ENCODE measurements at regions of chr16 and their contacts with region 1.

Region 1: DNA sequence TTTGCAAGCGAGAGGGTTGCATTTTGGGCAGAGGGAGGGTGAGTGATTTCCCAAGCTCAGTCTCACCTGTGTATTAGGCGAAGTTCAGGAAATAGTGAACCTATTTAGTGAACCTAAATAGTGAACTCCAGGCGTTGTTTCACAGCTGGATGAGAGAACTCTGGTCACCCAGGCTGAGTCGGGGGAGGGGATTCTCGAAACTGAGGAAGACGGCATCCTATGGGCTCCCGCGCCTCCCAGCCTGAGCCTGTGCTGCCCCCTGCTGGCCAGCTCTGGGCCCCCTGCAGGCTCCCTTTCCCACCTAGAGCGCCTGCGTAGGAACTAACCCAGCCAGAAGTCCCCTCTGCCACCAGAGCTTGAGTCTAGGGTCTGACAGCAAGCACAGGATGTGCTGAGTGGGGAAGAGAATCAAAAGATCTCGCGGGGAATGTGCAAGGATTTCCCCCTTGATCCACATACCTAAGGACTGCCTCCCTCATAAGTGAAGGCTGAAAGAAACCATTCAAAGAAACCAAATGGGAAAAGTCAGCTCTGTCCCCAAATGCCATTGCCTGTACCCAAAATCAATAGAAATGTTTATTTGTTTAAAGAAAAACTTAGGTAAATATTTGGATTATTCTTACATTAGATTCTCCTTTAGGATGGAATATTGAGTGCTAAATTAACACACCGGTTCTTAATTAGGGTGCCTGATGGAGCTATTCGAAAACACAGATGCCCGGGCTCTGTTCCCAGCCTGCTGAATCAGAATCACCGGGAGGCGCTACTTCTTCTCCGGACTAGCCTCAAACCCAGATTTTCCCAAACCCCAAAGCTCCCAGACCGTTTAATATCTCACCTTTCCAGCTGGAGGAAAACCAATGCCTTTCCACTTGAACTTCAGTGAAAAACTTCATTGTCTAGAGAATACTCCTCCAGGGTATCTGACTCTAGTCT is 14.8 kb upstream of the MARVELD3 start:
- DNase-seq: peak; percentile 59
- H3K4me3 Mint-ChIP-seq: no peak overlapping the region
- H3K27ac Mint-ChIP-seq: no peak overlapping the region
- H3K4me1 Mint-ChIP-seq: no peaks in the 10 kb centered on the region
- H3K27me3 Mint-ChIP-seq: peaks cover 29% of the 10 kb centered on the region

Region 2: GRCh38 chr16:71537643-71538042 is 73.6 kb before region 1 on chr16:
- intact Hi-C with region 1: loop called (anchors 2 kb)
- DNase-seq: peak; percentile 5
- H3K4me3 Mint-ChIP-seq: no peak overlapping the region
- H3K27ac Mint-ChIP-seq: no peak overlapping the region
- H3K4me1 Mint-ChIP-seq: peaks cover 4% of the 10 kb centered on the region
- H3K27me3 Mint-ChIP-seq: peaks cover 6% of the 10 kb centered on the region

Region 3: DNA sequence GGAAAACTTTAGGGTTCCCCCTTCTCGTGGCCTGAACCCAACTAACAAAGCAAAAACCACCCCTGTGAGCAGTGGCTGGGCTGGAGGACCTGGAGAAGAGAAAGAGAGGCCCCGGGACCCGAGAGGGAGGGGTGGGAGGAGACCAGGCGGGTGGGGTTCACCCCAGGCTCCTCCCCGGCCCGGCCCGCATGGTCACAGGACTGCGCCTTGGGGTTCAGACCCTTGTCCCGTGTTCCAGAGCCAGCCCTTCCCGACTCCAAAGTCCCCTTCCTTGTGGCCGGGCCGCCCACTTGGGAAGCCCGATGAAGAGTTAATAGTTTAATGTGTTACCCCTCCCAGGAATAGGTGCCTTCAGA is 15.6 kb after region 1 on chr16:
- intact Hi-C with region 1: no loop called
- DNase-seq: no peak
- H3K4me3 Mint-ChIP-seq: no peak overlapping the region
- H3K27ac Mint-ChIP-seq: no peak overlapping the region
- H3K4me1 Mint-ChIP-seq: peaks cover 8% of the 10 kb centered on the region
- H3K27me3 Mint-ChIP-seq: peaks cover 22% of the 10 kb centered on the region

Region 4: GRCh38 chr16:71637398-71637797 is 26.2 kb after region 1 on chr16:
- intact Hi-C with region 1: no loop called
- DNase-seq: no peak
- H3K4me3 Mint-ChIP-seq: no peak overlapping the region
- H3K27ac Mint-ChIP-seq: no peak overlapping the region
- H3K4me1 Mint-ChIP-seq: no peaks in the 10 kb centered on the region
- H3K27me3 Mint-ChIP-seq: no peaks in the 10 kb centered on the region

Measured in activated T-helper 1 cell treated with anti-CD3 and anti-CD28 coated beads, Interleukin-12 subunit alpha, Interleukin-12 subunit beta, Interleukin-2, Interleukin-4 antibody, amounts not matched to agents 30 ng/mL and 10 ng/mL and 1 ng/mL, durations not matched to agents 14 hours and 24 hours and 36 hours (primary cell).